Ascending aorta (tissue), 2 donors: ENCODE measurements at regions of chrX and their contacts with region 1.

Region 1: GRCh38 chrX:19514791-19515614 is at the start of gene MAP3K15:
- DNase-seq: no peak
- H3K4me3 ChIP-seq: peak within 1 kb of the TSS; percentile 44 to 67
- H3K27ac ChIP-seq: no peak within 1 kb of the TSS
- H3K4me1 ChIP-seq: no peaks in the 10 kb centered on the region
- H3K27me3 ChIP-seq: no peaks in the 10 kb centered on the region
- CTCF ChIP-seq: peak in 1 of 3 experiments; percentile 12
- total RNA-seq, gene MAP3K15: 0.21 TPM

Region 2: DNA sequence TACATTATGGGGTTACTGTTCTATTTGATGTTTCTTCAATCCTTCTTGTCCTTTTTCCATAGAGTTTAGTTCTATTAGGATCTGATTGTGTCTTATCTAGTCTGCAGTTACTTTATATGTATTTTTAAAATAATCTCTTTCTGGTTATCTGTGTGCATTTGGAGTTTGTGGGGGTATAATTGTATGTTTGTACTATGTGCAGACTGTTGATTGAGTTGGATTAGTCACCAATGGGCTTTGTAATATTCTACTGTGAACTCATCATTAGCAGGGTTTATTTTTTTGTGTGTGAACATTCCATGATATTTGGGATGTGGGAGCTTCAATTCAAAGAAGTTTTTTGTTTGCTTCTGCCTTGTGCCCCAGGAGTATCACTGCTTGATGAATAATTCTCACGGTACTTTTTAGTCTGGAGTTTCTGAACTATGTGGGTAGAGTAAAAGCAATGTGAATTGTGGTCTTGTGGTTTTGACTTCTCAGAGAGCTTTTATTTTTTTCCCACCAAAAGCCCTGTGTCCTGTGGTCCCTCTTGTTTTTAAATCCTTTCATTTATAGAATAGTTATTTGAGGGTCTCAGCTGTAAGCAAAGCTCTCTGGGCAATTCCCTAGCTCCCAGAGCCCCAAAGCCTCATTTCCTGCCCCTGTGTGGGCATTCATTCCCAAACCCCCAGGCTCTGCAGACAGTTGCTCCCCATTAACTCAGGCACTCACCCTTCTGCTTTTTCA is 658.9 kb before region 1 on chrX:
- intact Hi-C with region 1: no loop called
- DNase-seq: no peak
- H3K4me3 ChIP-seq: no peak overlapping the region
- H3K27ac ChIP-seq: no peak overlapping the region
- H3K4me1 ChIP-seq: no peaks in the 10 kb centered on the region
- H3K27me3 ChIP-seq: no peaks in the 10 kb centered on the region
- CTCF ChIP-seq: no peak

Region 3: DNA sequence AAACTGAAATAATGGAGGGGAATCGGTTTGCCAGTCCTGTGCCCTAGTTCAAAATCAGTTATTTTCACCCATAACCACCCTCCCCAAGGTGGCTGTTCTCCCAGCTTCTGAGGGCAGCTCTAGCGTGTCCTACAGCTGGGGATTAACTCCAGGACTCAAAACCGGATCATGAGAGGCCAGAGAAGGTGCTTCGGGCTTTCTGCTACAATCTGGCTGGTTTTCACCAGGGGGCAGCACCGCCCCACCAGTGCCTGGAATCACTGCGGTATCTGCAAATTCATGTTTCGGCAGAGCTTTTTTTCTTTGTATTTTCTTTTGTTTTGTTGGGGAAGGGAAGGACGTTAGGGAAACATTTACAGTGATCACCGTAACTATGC is 142.8 kb before region 1 on chrX:
- intact Hi-C with region 1: loop called (anchors 10 kb)
- DNase-seq: peak in 1 of 2 donors; percentile 74
- H3K4me3 ChIP-seq: peak overlapping the region; percentile 45 to 60
- H3K27ac ChIP-seq: no peak overlapping the region
- H3K4me1 ChIP-seq: no peaks in the 10 kb centered on the region
- H3K27me3 ChIP-seq: no peaks in the 10 kb centered on the region
- CTCF ChIP-seq: peak; percentile 19 to 68 (median 40)

Region 4: DNA sequence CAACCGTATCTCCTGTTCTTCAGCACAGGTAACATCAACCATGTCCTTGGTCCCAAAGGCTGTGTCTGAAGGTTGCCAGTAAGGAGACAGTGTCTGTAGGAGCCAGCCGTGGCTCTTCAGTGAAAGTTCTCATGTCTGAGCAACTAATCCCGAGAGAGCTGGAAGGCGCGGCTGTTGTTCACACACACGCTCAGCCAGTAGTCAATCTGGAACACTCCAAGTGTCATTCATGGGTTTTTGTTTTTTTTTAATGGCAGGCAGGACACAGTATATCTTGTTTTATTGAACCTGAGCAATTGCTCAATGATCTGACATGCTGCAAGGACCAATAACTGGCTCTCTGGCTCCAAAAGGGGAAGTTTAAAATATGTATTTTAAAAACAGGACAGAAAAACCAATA is 48.7 kb after region 1 on chrX:
- intact Hi-C with region 1: no loop called
- DNase-seq: no peak
- H3K4me3 ChIP-seq: no peak overlapping the region
- H3K27ac ChIP-seq: no peak overlapping the region
- H3K4me1 ChIP-seq: no peaks in the 10 kb centered on the region
- H3K27me3 ChIP-seq: no peaks in the 10 kb centered on the region
- CTCF ChIP-seq: no peak